Esophagus muscularis mucosa (tissue), 4 donors: ENCODE measurements at regions of chr13 and their contacts with region 1.

Region 1: DNA sequence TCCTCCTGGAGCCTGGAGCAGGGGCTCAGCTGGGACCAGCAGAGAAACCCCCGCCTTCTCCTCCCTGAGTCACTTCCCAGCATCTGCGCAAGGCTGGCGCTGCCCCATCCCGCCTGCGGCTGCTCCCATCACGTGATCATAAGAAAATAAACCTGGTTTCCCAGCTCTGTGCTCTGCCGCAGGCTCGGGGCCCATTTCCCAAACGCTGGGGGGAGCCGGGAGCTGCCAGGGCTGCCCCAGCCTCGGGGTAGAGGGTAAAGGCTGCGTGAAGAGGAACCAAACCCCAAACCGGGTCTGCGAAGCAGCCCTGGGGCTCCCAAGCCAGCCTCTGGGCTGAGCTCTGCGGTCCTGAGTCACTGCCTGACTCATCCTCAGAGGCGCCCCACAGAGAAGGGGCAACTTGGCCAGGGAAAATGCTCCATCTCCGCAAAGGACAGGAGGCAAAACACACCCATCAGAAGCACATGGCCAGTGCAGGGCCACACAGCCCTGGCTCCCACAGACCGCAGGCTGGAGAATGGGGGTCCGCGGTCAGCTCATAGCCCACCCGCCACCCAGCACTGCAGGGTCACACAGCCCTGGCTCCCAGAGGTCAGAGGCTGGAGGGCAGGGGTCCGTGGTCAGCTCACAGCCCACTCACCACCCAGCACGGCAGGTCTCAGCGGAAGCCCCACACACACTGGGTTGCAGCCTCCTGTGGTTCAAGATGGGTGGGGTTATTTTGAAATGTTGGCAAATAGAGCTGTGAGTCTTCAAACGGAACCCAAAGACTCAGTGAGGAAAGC is 67.1 kb downstream of the RASA3 start:
- DNase-seq: peak; percentile 98
- H3K4me3 ChIP-seq: peak overlapping the region; percentile 44 to 60 (median 46)
- H3K27ac ChIP-seq: peak overlapping the region; percentile 91 to 99 (median 96)
- H3K4me1 ChIP-seq: peaks cover 67 to 88% (median 78%) of the 10 kb centered on the region in 4 donors
- H3K27me3 ChIP-seq: no peaks in the 10 kb centered on the region
- CTCF ChIP-seq: no peak
- EP300 ChIP-seq: peak; percentile 93
- POLR2A ChIP-seq: no peak

Region 2: GRCh38 chr13:114099918-114100445 is 34.6 kb after region 1 on chr13:
- intact Hi-C with region 1: loop called (anchors 5 kb)
- DNase-seq: no peak
- H3K4me3 ChIP-seq: no peak overlapping the region
- H3K27ac ChIP-seq: peak overlapping the region; percentile 77 to 83 (median 79)
- H3K4me1 ChIP-seq: peaks cover 26 to 71% (median 52%) of the 10 kb centered on the region in 4 donors
- H3K27me3 ChIP-seq: no peaks in the 10 kb centered on the region
- CTCF ChIP-seq: no peak
- EP300 ChIP-seq: no peak
- POLR2A ChIP-seq: no peak

Region 3: GRCh38 chr13:114132419-114133121 is 67.2 kb after region 1 on chr13 and contains the start of gene RASA3:
- intact Hi-C with region 1: loop called (anchors 5 kb)
- DNase-seq: no peak
- H3K4me3 ChIP-seq: peak within 1 kb of the TSS; percentile 69 to 98 (median 81)
- H3K27ac ChIP-seq: peak within 1 kb of the TSS; percentile 84 to 90 (median 87)
- H3K4me1 ChIP-seq: peaks cover 37 to 58% (median 44%) of the 10 kb centered on the region in 4 donors
- H3K27me3 ChIP-seq: peaks cover 0 to 6% (median 0%) of the 10 kb centered on the region in 4 donors
- CTCF ChIP-seq: peak in 1 of 3 experiments; percentile 6
- EP300 ChIP-seq: no peak
- POLR2A ChIP-seq: no peak
- total RNA-seq, gene RASA3: 29.5 to 38.1 (median 34.6) TPM

Region 4: GRCh38 chr13:114303700-114304327 is 238.5 kb after region 1 on chr13:
- intact Hi-C with region 1: no loop called
- DNase-seq: no peak
- H3K4me3 ChIP-seq: no peak overlapping the region
- H3K27ac ChIP-seq: no peak overlapping the region
- H3K4me1 ChIP-seq: no peaks in the 10 kb centered on the region
- H3K27me3 ChIP-seq: no peaks in the 10 kb centered on the region
- CTCF ChIP-seq: no peak
- EP300 ChIP-seq: no peak
- POLR2A ChIP-seq: no peak